PC-9 (cell line): ENCODE measurements at regions of chr15 and their contacts with region 1.

Region 1: GRCh38 chr15:77024271-77025082 is 29.6 kb downstream of the PSTPIP1 start:
- DNase-seq: peak in 1 of 2 experiments; percentile 69
- H3K4me3 ChIP-seq: no peak overlapping the region
- H3K27ac ChIP-seq: no peak overlapping the region
- H3K4me1 ChIP-seq: no peaks in the 10 kb centered on the region
- H3K27me3 ChIP-seq: no peaks in the 10 kb centered on the region
- CTCF ChIP-seq: peak; percentile 98

Region 2: GRCh38 chr15:76904461-76905012 is 119.9 kb before region 1 on chr15:
- CTCF ChIA-PET with region 1: no interaction called
- POLR2A ChIA-PET with region 1: no interaction called
- intact Hi-C with region 1: loop called (anchors 5 kb)
- DNase-seq: peak in 1 of 2 experiments; percentile 22
- H3K4me3 ChIP-seq: peak overlapping the region; percentile 88
- H3K27ac ChIP-seq: no peak overlapping the region
- H3K4me1 ChIP-seq: peaks cover 22% of the 10 kb centered on the region; the same call in 1 of the 2 replicates
- H3K27me3 ChIP-seq: no peaks in the 10 kb centered on the region
- CTCF ChIP-seq: no peak

Region 3: GRCh38 chr15:77040673-77041072 is 16.2 kb after region 1 on chr15:
- CTCF ChIA-PET with region 1: no interaction called
- POLR2A ChIA-PET with region 1: no interaction called
- intact Hi-C with region 1: no loop called
- DNase-seq: no peak
- H3K4me3 ChIP-seq: no peak overlapping the region
- H3K27ac ChIP-seq: no peak overlapping the region
- H3K4me1 ChIP-seq: no peaks in the 10 kb centered on the region
- H3K27me3 ChIP-seq: no peaks in the 10 kb centered on the region
- CTCF ChIP-seq: no peak